Naive thymus-derived CD4-positive, alpha-beta T cell (primary cell): ENCODE measurements at regions of chr5 and their contacts with region 1.

Region 1: GRCh38 chr5:138575194-138576015 is at the start of gene HSPA9:
- DNase-seq: peak; percentile 92 to 99 (median 98)
- ATAC-seq: peak; percentile 89
- H3K4me3 ChIP-seq: peak within 1 kb of the TSS; percentile 91
- H3K4me3 Mint-ChIP-seq: peak within 1 kb of the TSS; percentile 94 to 99 (median 97)
- H3K27ac ChIP-seq: peak within 1 kb of the TSS; percentile 94
- H3K27ac Mint-ChIP-seq: peak within 1 kb of the TSS; percentile 100
- H3K4me1 ChIP-seq: peaks cover 10 to 15% of the 10 kb centered on the region in 2 donors
- H3K4me1 Mint-ChIP-seq: peaks cover 15 to 48% (median 43%) of the 10 kb centered on the region in 7 donors
- H3K27me3 ChIP-seq: no peaks in the 10 kb centered on the region
- H3K27me3 Mint-ChIP-seq: peaks cover 0 to 4% (median 0%) of the 10 kb centered on the region in 5 donors
- total RNA-seq, gene HSPA9: 152 to 274 (median 185) TPM

Region 2: DNA sequence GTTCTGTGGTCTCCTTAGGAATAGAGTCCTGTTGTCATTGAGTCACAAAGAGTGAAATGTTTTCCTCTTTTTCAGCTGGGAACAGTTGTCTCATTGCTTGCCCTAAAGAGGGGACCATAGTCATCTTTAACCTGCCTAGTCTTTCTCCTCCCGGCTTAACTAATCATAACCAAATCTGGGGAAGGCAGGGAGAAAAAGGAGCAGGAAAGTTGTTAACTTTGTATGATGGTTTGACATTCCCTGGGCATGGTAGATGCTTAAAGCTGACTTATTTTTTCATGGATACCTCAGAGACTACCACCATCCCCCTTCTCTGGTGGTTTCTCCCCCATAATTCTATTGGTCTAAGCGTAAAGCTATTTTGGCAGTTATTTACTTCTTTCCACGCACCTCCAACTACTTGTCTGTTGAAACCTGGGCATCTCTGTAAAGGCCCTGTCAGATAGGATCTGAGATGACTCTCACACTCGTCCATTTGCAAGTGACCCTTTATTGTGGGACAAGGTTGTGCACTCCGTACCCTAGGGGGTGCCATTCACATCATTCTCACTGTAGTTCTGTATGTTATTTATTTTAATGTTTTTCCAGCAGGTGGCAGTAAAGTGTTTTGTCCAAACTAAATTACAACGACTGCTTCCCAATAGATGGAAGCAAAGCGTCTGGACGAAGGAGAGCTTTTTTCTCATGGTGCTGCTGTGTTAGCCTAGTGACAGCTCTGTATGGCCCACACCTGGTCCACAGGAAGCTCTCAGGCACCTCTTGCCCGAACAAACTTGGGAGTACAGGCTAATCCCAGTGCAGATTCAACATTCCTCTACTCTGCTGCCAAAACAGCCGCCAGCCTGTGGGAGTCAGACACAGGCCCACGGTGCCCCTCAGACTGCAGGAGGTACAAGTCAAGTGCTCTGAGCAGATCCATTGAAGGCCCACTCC is 539.5 kb before region 1 on chr5:
- CTCF ChIA-PET with region 1: no interaction called
- POLR2A ChIA-PET with region 1: interaction called, 3 read pairs
- intact Hi-C with region 1: loop called in 1 of 2 experiments (anchors 5 kb)
- DNase-seq: peak; percentile 11 to 80 (median 72)
- ATAC-seq: peak; percentile 76
- H3K4me3 ChIP-seq: no peak overlapping the region
- H3K4me3 Mint-ChIP-seq: peak overlapping the region in 9 of 10 donors; percentile 0 to 78 (median 25)
- H3K27ac ChIP-seq: no peak overlapping the region
- H3K27ac Mint-ChIP-seq: peak overlapping the region in 8 of 9 donors; percentile 4 to 89 (median 37)
- H3K4me1 ChIP-seq: peaks cover 4 to 24% of the 10 kb centered on the region in 2 donors
- H3K4me1 Mint-ChIP-seq: peaks cover 15 to 30% (median 24%) of the 10 kb centered on the region in 7 donors
- H3K27me3 ChIP-seq: no peaks in the 10 kb centered on the region
- H3K27me3 Mint-ChIP-seq: no peaks in the 10 kb centered on the region

Region 3: DNA sequence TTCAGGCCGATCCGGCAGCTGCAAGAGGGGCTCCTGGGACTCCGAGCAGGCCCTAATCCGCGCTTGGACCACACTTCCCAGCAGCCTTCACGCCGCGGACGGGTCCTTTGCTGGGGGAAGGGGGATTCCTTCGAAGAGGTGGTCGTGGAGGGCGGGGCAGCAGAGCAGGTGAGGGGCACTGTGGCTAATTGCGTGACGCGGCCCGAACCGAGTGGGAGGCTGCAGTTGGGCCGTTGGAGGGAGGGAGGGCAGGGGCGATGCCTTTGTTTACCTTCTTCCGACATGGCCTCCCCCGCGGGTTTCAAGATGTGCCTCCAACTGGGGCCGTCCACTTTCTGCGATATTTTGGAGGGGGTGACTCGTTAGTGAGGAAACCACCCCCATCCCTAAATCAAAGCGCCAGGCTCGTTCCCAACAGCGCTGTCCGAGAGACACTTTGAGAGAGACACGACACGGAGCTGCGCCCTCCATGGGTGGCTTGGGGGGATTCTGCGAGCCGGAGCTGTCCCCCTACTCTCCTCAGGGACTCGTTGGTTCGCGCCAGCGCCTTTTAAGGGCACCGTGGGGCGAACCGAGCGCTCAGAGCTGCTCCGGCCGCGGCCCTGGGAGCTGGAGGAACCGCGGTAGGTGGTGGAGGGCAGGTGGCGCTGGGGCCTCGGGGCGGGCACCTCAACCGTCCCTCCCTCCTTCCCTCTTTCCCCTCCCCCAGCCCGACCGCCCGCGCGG is 237.6 kb before region 1 on chr5 and contains the start of gene FAM53C:
- CTCF ChIA-PET with region 1: no interaction called
- POLR2A ChIA-PET with region 1: interaction called, 15 read pairs
- intact Hi-C with region 1: loop called (anchors 1 kb)
- DNase-seq: peak; percentile 87 to 98 (median 93)
- ATAC-seq: peak; percentile 91
- H3K4me3 ChIP-seq: peak within 1 kb of the TSS; percentile 86
- H3K4me3 Mint-ChIP-seq: peak within 1 kb of the TSS; percentile 77 to 98 (median 94)
- H3K27ac ChIP-seq: peak within 1 kb of the TSS; percentile 95
- H3K27ac Mint-ChIP-seq: peak within 1 kb of the TSS; percentile 96 to 100 (median 99)
- H3K4me1 ChIP-seq: peaks cover 17 to 25% of the 10 kb centered on the region in 2 donors
- H3K4me1 Mint-ChIP-seq: peaks cover 16 to 42% (median 39%) of the 10 kb centered on the region in 7 donors
- H3K27me3 ChIP-seq: no peaks in the 10 kb centered on the region
- H3K27me3 Mint-ChIP-seq: no peaks in the 10 kb centered on the region
- total RNA-seq, gene FAM53C: 25.0 to 71.8 (median 27.7) TPM

Region 4: DNA sequence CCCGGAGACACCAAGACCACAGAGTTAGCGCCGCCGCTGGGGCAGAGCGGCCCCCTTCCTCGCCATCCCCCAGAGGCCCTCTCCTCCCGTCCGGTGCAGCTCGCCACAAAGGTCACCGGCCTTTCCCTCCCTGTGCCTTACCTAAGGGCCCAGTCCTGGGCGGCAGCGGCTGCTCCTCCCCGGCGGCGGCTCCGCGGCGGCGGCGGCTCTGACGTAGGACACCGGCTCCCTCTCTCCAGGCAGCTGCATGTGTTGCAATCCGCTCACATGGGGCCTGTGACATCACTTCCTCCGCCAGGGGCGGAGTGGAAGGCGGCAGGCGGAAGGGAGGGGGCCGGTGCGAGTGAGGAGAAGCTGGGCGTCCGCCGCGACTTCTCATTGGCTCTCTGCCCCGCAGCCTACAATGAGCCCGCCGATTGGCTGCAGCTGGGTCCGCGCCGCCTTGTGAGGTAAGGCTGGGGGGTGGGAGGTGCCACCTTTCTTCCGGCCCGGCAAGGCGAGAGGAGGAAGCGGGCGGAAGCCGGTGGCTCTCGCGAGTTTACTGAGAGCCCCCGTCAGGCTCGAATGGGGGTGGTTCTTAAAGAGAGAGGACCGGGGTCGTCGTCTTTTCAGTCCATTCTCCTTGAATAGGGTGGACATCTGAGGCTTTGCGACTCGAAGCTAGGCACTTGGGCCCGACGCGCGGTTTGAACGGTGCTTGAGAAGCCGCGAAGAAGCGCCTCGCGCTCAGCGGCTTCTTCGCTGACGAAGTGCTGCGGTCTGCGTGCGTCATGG is 32.3 kb before region 1 on chr5 and contains the start of gene ETF1:
- CTCF ChIA-PET with region 1: interaction called, 7 read pairs
- POLR2A ChIA-PET with region 1: interaction called, 62 read pairs
- intact Hi-C with region 1: loop called (anchors 1 kb)
- DNase-seq: peak; percentile 95 to 100 (median 100)
- ATAC-seq: peak; percentile 95
- H3K4me3 ChIP-seq: peak within 1 kb of the TSS; percentile 87
- H3K4me3 Mint-ChIP-seq: peak within 1 kb of the TSS; percentile 94 to 100 (median 99)
- H3K27ac ChIP-seq: peak within 1 kb of the TSS; percentile 94
- H3K27ac Mint-ChIP-seq: peak within 1 kb of the TSS; percentile 97 to 100 (median 100)
- H3K4me1 ChIP-seq: peaks cover 36 to 41% of the 10 kb centered on the region in 2 donors
- H3K4me1 Mint-ChIP-seq: peaks cover 55 to 91% (median 73%) of the 10 kb centered on the region in 7 donors
- H3K27me3 ChIP-seq: no peaks in the 10 kb centered on the region
- H3K27me3 Mint-ChIP-seq: no peaks in the 10 kb centered on the region
- total RNA-seq, gene ETF1: 40.6 to 137 (median 84.1) TPM

Region 5: GRCh38 chr5:139197710-139198669 is 622.6 kb after region 1 on chr5 and contains the start of gene SIL1:
- CTCF ChIA-PET with region 1: no interaction called
- POLR2A ChIA-PET with region 1: interaction called, 4 read pairs
- intact Hi-C with region 1: loop called (anchors 1 kb)
- DNase-seq: peak; percentile 88 to 94 (median 91)
- ATAC-seq: peak; percentile 99
- H3K4me3 ChIP-seq: peak within 1 kb of the TSS; percentile 97
- H3K4me3 Mint-ChIP-seq: peak within 1 kb of the TSS; percentile 83 to 96 (median 90)
- H3K27ac ChIP-seq: peak within 1 kb of the TSS; percentile 89
- H3K27ac Mint-ChIP-seq: peak within 1 kb of the TSS; percentile 86 to 96 (median 91)
- H3K4me1 ChIP-seq: peaks cover 8% of the 10 kb centered on the region in 2 donors
- H3K4me1 Mint-ChIP-seq: peaks cover 17 to 38% (median 26%) of the 10 kb centered on the region in 7 donors
- H3K27me3 ChIP-seq: no peaks in the 10 kb centered on the region
- H3K27me3 Mint-ChIP-seq: no peaks in the 10 kb centered on the region
- total RNA-seq, gene SIL1: 11.9 to 27.1 (median 22.8) TPM

Region 6: GRCh38 chr5:139341650-139342422 is 766.4 kb after region 1 on chr5 and contains the start of gene PAIP2:
- CTCF ChIA-PET with region 1: no interaction called
- POLR2A ChIA-PET with region 1: interaction called, 7 read pairs
- intact Hi-C with region 1: loop called (anchors 1 kb)
- DNase-seq: peak; percentile 94 to 98 (median 97)
- ATAC-seq: peak; percentile 95
- H3K4me3 ChIP-seq: peak within 1 kb of the TSS; percentile 96
- H3K4me3 Mint-ChIP-seq: peak within 1 kb of the TSS; percentile 95 to 100 (median 98)
- H3K27ac ChIP-seq: peak within 1 kb of the TSS; percentile 98
- H3K27ac Mint-ChIP-seq: peak within 1 kb of the TSS; percentile 96 to 100 (median 99)
- H3K4me1 ChIP-seq: peaks cover 28 to 30% of the 10 kb centered on the region in 2 donors
- H3K4me1 Mint-ChIP-seq: peaks cover 34 to 65% (median 55%) of the 10 kb centered on the region in 7 donors
- H3K27me3 ChIP-seq: no peaks in the 10 kb centered on the region
- H3K27me3 Mint-ChIP-seq: peaks cover 0 to 5% (median 0%) of the 10 kb centered on the region in 5 donors
- total RNA-seq, gene PAIP2: 88.8 to 121 (median 106) TPM

Region 7: DNA sequence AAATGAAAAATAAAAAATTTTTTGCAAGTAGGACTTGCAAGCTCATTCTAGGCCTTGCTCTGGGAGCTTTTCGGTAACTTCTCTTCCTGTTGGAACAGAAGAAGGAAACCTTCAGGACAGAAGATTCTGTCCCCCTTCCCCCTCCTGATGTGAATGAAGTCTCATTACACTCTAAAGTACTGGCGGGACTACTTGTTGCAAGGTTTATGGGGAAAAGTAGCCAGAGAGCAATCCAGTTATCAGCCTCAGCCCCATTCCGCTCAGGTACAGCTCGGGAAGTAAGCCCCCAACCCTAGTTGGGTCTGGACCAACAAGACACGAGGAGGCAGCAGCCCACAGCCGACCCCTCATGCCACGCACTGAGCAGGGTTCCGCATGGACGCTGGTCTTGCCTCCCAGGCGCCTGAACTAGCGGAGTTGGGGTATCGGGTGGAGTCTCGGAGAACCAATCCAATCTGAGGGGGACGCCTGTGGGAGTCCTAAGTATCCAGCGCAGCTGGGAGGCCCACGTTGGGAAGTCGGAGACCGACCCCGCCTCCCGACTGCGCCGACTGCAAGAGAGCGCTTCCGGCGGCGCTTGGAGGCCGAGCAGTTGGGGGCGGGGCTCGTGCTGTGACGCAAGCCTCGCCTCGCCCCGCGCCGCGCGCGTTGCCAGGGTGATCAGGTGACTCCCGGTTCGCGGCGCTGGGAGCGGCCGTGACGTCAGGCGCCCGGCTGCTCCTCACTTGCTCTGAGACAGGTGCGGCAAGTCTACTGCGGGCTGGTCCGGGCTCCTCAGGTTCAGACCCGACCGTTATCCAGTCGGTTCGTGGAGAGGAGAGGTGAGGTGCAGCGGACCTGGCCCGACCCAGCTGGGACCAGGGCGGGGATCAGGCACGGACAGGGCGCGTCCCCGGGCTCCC is 1599.3 kb after region 1 on chr5 and contains the start of gene CYSTM1:
- CTCF ChIA-PET with region 1: no interaction called
- POLR2A ChIA-PET with region 1: no interaction called
- intact Hi-C with region 1: loop called in 1 of 2 experiments (anchors 1 kb)
- DNase-seq: peak; percentile 95 to 98 (median 97)
- ATAC-seq: peak; percentile 94
- H3K4me3 ChIP-seq: peak within 1 kb of the TSS; percentile 97
- H3K4me3 Mint-ChIP-seq: peak within 1 kb of the TSS; percentile 84 to 95 (median 91)
- H3K27ac ChIP-seq: peak within 1 kb of the TSS; percentile 89
- H3K27ac Mint-ChIP-seq: peak within 1 kb of the TSS; percentile 78 to 98 (median 95)
- H3K4me1 ChIP-seq: peaks cover 8 to 14% of the 10 kb centered on the region in 2 donors
- H3K4me1 Mint-ChIP-seq: peaks cover 7 to 20% (median 14%) of the 10 kb centered on the region in 7 donors
- H3K27me3 ChIP-seq: no peaks in the 10 kb centered on the region
- H3K27me3 Mint-ChIP-seq: peaks cover 0 to 30% (median 0%) of the 10 kb centered on the region in 5 donors
- total RNA-seq, gene CYSTM1: 1.6 to 11.1 (median 3.5) TPM